ENCODE measurements at regions of chr3 and their contacts with region 1.

Region 1: GRCh38 chr3:196739671-196740480 is at the start of gene PAK2:
- DNase-seq: peak; percentile 80 to 92 (median 85)
- ATAC-seq: peak; percentile 95
- H3K4me3 ChIP-seq: peak within 1 kb of the TSS; percentile 78
- H3K4me3 Mint-ChIP-seq: peak within 1 kb of the TSS; percentile 90 to 100 (median 100)
- H3K27ac ChIP-seq: peak within 1 kb of the TSS; percentile 94
- H3K27ac Mint-ChIP-seq: peak within 1 kb of the TSS; percentile 93 to 100 (median 99)
- H3K4me1 ChIP-seq: peaks cover 15 to 25% of the 10 kb centered on the region in 2 donors
- H3K4me1 Mint-ChIP-seq: peaks cover 25 to 38% (median 29%) of the 10 kb centered on the region in 7 donors
- H3K27me3 ChIP-seq: no peaks in the 10 kb centered on the region
- H3K27me3 Mint-ChIP-seq: no peaks in the 10 kb centered on the region
- total RNA-seq, gene PAK2: 57.7 to 97.3 (median 79.7) TPM

Region 2: DNA sequence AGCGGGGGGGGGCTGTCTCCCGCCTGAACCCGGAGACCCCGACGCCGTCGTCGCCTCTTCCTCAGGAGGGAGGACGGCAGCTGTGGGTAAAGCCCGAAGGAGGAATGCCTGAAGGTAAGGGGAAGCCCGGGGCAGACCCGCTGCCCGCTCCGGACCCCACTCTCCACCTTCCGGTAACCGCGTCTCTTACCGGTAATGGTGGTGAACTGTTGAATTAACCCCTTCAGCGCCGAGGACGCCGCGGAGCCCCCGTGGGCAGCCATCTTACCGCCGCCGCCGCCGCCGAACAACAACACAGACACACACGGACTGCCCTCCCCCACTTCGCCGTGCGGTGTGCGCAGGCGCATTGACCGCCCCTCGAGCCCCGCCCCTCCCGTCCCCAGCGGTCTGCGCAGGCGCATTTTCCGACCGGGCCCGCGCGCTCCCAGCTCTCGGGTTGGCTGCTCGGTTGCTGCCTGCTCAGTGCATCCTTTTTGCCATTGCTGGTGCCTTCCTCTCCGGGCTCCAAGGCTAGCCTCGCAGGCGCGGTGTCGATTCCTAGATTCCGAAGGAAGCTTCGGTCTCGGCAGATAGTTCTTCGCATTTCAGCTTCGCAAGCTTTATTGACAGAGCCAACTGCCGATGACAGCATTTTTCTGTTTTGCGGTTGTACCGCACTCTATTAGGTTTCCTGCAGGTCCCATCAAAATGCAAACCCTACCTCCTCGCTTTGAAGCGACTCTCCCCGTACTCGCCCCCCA is 307.6 kb before region 1 on chr3 and contains the start of gene UBXN7:
- CTCF ChIA-PET with region 1: no interaction called
- POLR2A ChIA-PET with region 1: no interaction called
- intact Hi-C with region 1: loop called in 1 of 2 experiments (anchors 5 kb)
- DNase-seq: peak; percentile 92 to 97 (median 95)
- ATAC-seq: peak; percentile 94
- H3K4me3 ChIP-seq: peak within 1 kb of the TSS; percentile 100
- H3K4me3 Mint-ChIP-seq: peak within 1 kb of the TSS; percentile 81 to 98 (median 86)
- H3K27ac ChIP-seq: peak within 1 kb of the TSS; percentile 90
- H3K27ac Mint-ChIP-seq: peak within 1 kb of the TSS; percentile 68 to 95 (median 81)
- H3K4me1 ChIP-seq: peaks cover 4 to 6% of the 10 kb centered on the region in 2 donors
- H3K4me1 Mint-ChIP-seq: peaks cover 17 to 39% (median 32%) of the 10 kb centered on the region in 7 donors
- H3K27me3 ChIP-seq: no peaks in the 10 kb centered on the region
- H3K27me3 Mint-ChIP-seq: peaks cover 0 to 2% (median 0%) of the 10 kb centered on the region in 5 donors
- total RNA-seq, gene UBXN7: 52.6 to 90.6 (median 77.0) TPM

Region 3: GRCh38 chr3:196639483-196640296 is 100.2 kb before region 1 on chr3 and contains the start of gene NRROS:
- CTCF ChIA-PET with region 1: no interaction called
- POLR2A ChIA-PET with region 1: interaction called, 4 read pairs
- intact Hi-C with region 1: loop called in 1 of 2 experiments (anchors 1 kb)
- DNase-seq: peak; percentile 25 to 71 (median 46)
- ATAC-seq: peak; percentile 70
- H3K4me3 ChIP-seq: peak within 1 kb of the TSS; percentile 75
- H3K4me3 Mint-ChIP-seq: peak within 1 kb of the TSS; percentile 75 to 94 (median 92)
- H3K27ac ChIP-seq: peak within 1 kb of the TSS; percentile 79
- H3K27ac Mint-ChIP-seq: peak within 1 kb of the TSS; percentile 74 to 95 (median 92)
- H3K4me1 ChIP-seq: peaks cover 27 to 36% of the 10 kb centered on the region in 2 donors
- H3K4me1 Mint-ChIP-seq: peaks cover 49 to 92% (median 71%) of the 10 kb centered on the region in 7 donors
- H3K27me3 ChIP-seq: no peaks in the 10 kb centered on the region
- H3K27me3 Mint-ChIP-seq: no peaks in the 10 kb centered on the region
- total RNA-seq, gene NRROS: 9.8 to 53.3 (median 14.2) TPM

Region 4: GRCh38 chr3:196778755-196779154 is 38.9 kb after region 1 on chr3:
- CTCF ChIA-PET with region 1: no interaction called
- POLR2A ChIA-PET with region 1: interaction called, 4 read pairs
- intact Hi-C with region 1: loop called in 1 of 2 experiments (anchors 5 kb)
- DNase-seq: no peak
- ATAC-seq: no peak
- H3K4me3 ChIP-seq: no peak overlapping the region
- H3K4me3 Mint-ChIP-seq: no peak overlapping the region
- H3K27ac ChIP-seq: no peak overlapping the region
- H3K27ac Mint-ChIP-seq: peak overlapping the region in 5 of 9 donors; percentile 35 to 82 (median 78)
- H3K4me1 ChIP-seq: peaks cover 6 to 9% of the 10 kb centered on the region in 2 donors
- H3K4me1 Mint-ChIP-seq: peaks cover 17 to 69% (median 60%) of the 10 kb centered on the region in 7 donors
- H3K27me3 ChIP-seq: no peaks in the 10 kb centered on the region
- H3K27me3 Mint-ChIP-seq: no peaks in the 10 kb centered on the region

Region 5: DNA sequence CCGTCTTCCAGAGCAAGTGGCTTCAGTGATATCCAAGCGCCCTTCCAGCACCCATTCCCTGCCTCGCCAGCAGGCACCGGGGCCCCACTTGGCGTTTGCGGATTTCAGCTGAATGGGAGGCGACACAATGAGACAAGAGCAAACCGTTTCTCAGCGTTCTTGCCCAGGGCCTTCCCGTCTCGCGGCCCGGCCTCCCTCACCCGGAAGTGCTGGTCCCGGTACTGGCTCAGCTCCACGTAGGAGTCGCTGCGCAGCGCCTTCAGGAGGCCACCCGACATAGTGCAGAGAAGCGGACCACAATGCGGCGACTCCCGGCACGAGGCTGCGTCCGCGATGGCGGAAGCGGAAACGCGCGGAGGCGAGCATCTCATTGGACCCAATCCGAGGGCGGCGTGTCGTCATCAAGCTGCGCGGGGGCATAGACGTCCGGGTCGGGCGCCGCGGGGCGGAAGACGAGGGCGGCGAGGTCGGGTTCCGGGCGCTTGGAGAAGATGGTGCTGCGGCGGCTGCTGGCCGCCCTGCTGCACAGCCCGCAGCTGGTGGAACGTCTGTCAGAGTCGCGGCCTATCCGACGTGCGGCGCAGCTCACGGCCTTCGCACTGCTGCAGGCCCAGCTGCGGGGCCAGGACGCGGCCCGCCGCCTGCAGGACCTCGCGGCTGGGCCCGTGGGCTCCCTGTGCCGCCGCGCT is 202.5 kb after region 1 on chr3 and contains the start of gene NCBP2:
- CTCF ChIA-PET with region 1: interaction called, 3 read pairs
- POLR2A ChIA-PET with region 1: interaction called, 20 read pairs
- intact Hi-C with region 1: loop called (anchors 1 kb)
- DNase-seq: peak; percentile 98 to 100 (median 99)
- ATAC-seq: peak; percentile 97
- H3K4me3 ChIP-seq: peak within 1 kb of the TSS; percentile 100
- H3K4me3 Mint-ChIP-seq: peak within 1 kb of the TSS; percentile 94 to 99 (median 98)
- H3K27ac ChIP-seq: peak within 1 kb of the TSS; percentile 94
- H3K27ac Mint-ChIP-seq: peak within 1 kb of the TSS; percentile 96 to 100 (median 98)
- H3K4me1 ChIP-seq: peaks cover 16 to 20% of the 10 kb centered on the region in 2 donors
- H3K4me1 Mint-ChIP-seq: peaks cover 30 to 64% (median 49%) of the 10 kb centered on the region in 7 donors
- H3K27me3 ChIP-seq: no peaks in the 10 kb centered on the region
- H3K27me3 Mint-ChIP-seq: peaks cover 0 to 5% (median 0%) of the 10 kb centered on the region in 5 donors
- total RNA-seq, gene NCBP2: 42.9 to 77.3 (median 67.5) TPM

Region 6: GRCh38 chr3:197554562-197555280 is 814.8 kb after region 1 on chr3:
- CTCF ChIA-PET with region 1: no interaction called
- POLR2A ChIA-PET with region 1: no interaction called
- intact Hi-C with region 1: loop called in 1 of 2 experiments (anchors 2 kb)
- DNase-seq: peak; percentile 76 to 93 (median 83)
- ATAC-seq: peak; percentile 97
- H3K4me3 ChIP-seq: peak overlapping the region; percentile 96
- H3K4me3 Mint-ChIP-seq: peak overlapping the region; percentile 91 to 95 (median 93)
- H3K27ac ChIP-seq: peak overlapping the region; percentile 89
- H3K27ac Mint-ChIP-seq: peak overlapping the region; percentile 57 to 94 (median 86)
- H3K4me1 ChIP-seq: peaks cover 7 to 9% of the 10 kb centered on the region in 2 donors
- H3K4me1 Mint-ChIP-seq: peaks cover 23 to 36% (median 31%) of the 10 kb centered on the region in 7 donors
- H3K27me3 ChIP-seq: no peaks in the 10 kb centered on the region
- H3K27me3 Mint-ChIP-seq: peaks cover 0 to 10% (median 6%) of the 10 kb centered on the region in 5 donors